ENCODE measurements at regions of chr1 and their contacts with region 1.

Region 1: GRCh38 chr1:38834937-38835827 is 24.4 kb downstream of the RRAGC start:
- DNase-seq: peak; percentile 91

Region 2: GRCh38 chr1:38046884-38047602 is 788.1 kb before region 1 on chr1:
- in situ Hi-C with region 1: loop called (anchors 25 kb)
- DNase-seq: peak; percentile 67